ENCODE measurements at regions of chr17 and their contacts with region 1.

Region 1: DNA sequence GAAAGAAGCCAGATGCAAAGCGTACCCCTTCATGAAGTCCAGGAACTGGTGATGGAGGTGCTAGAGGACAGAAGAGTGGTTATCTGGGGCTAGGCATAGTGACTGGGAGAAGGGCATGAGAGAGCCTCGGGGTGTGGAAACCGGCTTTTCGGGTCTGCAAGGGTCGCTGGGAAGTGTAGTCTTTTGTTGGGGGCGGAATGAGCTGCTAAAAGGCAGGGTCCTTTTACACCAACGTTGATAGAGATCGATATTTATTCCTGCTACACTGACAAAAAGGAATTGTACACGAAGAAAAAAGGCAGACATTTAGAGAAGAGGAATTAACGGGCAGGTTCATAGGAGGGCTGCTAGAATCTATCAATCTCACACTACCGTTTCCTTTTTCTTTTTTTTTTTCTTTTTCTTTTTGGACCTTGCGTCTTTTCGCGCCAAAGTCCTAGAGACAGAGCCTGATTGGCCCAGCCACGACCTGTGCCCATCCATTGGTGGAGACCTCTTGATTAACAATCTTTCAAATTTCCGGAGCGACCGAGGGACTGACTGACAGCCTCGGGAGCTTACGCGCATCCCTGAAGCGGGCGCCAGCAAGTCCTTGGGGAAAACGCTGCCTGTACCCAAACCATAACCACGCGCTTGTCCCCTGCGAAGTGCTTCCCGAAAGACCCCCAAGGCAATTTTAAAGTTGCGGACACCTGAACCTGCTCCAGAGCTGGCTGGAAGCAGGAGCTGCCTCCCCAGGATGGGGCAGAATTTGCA is 27.7 kb upstream of the DHRS7B start:
- DNase-seq: peak; percentile 89
- ATAC-seq: peak; percentile 99
- H3K4me3 Mint-ChIP-seq: peak overlapping the region; percentile 94
- H3K27ac Mint-ChIP-seq: peak overlapping the region; percentile 92
- H3K4me1 Mint-ChIP-seq: peaks cover 2% of the 10 kb centered on the region
- H3K27me3 Mint-ChIP-seq: no peaks in the 10 kb centered on the region

Region 2: DNA sequence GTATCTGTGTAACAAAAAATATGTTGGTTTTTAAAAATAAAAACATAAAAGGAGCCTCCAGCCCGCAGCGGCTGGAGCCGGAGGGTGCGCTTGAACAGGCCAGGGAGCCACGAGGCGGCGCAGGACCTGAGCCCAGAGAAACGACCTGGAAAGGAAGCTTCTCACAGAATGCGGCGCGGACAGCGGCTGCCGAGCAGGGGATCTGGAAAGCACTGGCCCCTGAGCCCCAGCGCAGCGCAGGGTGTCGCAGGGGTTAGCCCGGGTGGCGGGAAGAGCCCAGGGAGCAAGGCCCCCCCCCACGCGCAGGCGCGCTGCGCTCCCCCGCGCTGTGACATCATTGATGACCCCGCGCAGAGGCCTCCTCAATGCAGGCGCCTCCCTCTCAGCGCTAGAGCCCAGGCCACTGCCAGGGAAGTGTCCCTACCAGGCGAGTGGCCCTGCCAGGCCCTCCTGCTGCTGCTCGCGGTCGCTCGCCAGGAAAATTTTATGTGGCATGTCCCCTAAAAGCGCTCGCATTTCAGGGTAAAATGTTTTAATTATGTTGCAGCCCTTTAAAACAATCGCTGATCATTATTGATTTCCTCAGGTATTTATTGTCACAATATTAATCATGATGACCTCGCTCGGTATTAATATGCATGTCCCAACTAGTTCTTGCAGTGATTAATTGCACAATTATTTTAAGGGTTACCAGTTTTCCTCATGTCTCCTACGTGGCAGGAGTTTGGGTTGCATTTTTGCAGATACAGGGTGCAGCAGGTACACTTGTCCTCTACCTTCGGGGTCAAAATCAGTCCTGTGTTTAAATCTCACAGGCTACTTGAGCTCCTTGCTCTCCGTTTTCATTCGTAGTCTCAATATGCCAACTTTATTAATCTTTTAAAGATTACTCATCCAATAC is 190.5 kb before region 1 on chr17:
- CTCF ChIA-PET with region 1: no interaction called
- POLR2A ChIA-PET with region 1: no interaction called
- intact Hi-C with region 1: loop called in 1 of 2 experiments (anchors 2 kb)
- DNase-seq: peak; percentile 90
- ATAC-seq: peak; percentile 100
- H3K4me3 Mint-ChIP-seq: peak overlapping the region; percentile 65
- H3K27ac Mint-ChIP-seq: peak overlapping the region; percentile 76
- H3K4me1 Mint-ChIP-seq: peaks cover 3% of the 10 kb centered on the region
- H3K27me3 Mint-ChIP-seq: peaks cover 7% of the 10 kb centered on the region

Region 3: GRCh38 chr17:21119247-21119918 is 20.3 kb after region 1 on chr17:
- CTCF ChIA-PET with region 1: interaction called, 23 read pairs
- POLR2A ChIA-PET with region 1: no interaction called
- intact Hi-C with region 1: no loop called
- DNase-seq: peak; percentile 83
- ATAC-seq: peak; percentile 95
- H3K4me3 Mint-ChIP-seq: peak overlapping the region; percentile 2
- H3K27ac Mint-ChIP-seq: peak overlapping the region; percentile 12
- H3K4me1 Mint-ChIP-seq: peaks cover 7% of the 10 kb centered on the region
- H3K27me3 Mint-ChIP-seq: peaks cover 2% of the 10 kb centered on the region

Region 4: GRCh38 chr17:21284319-21285163 is 185.4 kb after region 1 on chr17 and contains the start of gene MAP2K3:
- CTCF ChIA-PET with region 1: interaction called, 6 read pairs
- POLR2A ChIA-PET with region 1: no interaction called
- intact Hi-C with region 1: loop called in 1 of 2 experiments (anchors 1 kb)
- DNase-seq: peak; percentile 99
- ATAC-seq: peak; percentile 76
- H3K4me3 Mint-ChIP-seq: peak within 1 kb of the TSS; percentile 98
- H3K27ac Mint-ChIP-seq: peak within 1 kb of the TSS; percentile 94
- H3K4me1 Mint-ChIP-seq: peaks cover 57% of the 10 kb centered on the region
- H3K27me3 Mint-ChIP-seq: no peaks in the 10 kb centered on the region
- total RNA-seq, gene MAP2K3: 122 to 123 TPM

Region 5: DNA sequence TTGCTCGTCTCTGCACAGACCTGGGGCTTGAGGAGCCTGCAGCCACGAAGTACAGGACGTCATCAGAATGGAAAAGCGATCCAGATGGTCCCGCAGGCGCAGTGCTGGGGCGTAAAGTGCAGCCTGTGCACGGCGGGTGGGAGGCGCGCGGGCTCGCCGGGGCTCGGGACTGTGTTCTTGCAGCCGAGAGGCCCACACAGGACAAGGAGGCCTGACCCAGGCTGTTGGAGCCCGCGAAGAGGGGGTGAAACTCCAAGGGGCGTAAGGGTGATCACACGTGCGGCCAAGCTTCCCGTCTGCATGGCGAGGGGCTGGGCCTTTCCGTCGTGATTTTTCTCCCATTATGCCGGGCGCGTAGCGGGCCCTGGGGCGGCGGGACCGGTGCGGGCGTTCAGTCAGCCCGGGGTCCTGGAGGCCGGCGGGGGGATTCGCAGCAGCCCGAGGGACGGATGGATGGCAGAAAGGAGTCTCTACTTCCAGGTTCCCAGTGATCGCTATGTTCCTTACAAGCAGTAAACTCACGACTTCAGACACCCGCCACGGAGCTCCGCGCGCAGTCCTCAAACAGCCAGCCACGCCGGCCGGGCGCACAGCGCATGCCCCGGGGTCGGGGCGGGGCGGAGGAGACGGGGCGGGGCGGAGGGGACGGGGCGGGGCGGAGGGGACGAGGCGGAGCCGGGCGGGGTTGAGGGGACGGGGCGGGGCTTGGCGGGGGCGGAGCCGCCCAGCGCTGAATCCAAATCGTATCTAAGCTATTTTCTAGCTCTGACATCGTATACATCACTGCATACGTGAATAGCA is 452.2 kb after region 1 on chr17:
- CTCF ChIA-PET with region 1: no interaction called
- POLR2A ChIA-PET with region 1: no interaction called
- intact Hi-C with region 1: loop called in 1 of 2 experiments (anchors 1 kb)
- DNase-seq: peak; percentile 91
- ATAC-seq: peak; percentile 84
- H3K4me3 Mint-ChIP-seq: peak overlapping the region; percentile 72
- H3K27ac Mint-ChIP-seq: peak overlapping the region; percentile 85
- H3K4me1 Mint-ChIP-seq: peaks cover 30% of the 10 kb centered on the region
- H3K27me3 Mint-ChIP-seq: peaks cover 4% of the 10 kb centered on the region